ENCODE measurements at regions of chr11 and their contacts with region 1.

Region 1: DNA sequence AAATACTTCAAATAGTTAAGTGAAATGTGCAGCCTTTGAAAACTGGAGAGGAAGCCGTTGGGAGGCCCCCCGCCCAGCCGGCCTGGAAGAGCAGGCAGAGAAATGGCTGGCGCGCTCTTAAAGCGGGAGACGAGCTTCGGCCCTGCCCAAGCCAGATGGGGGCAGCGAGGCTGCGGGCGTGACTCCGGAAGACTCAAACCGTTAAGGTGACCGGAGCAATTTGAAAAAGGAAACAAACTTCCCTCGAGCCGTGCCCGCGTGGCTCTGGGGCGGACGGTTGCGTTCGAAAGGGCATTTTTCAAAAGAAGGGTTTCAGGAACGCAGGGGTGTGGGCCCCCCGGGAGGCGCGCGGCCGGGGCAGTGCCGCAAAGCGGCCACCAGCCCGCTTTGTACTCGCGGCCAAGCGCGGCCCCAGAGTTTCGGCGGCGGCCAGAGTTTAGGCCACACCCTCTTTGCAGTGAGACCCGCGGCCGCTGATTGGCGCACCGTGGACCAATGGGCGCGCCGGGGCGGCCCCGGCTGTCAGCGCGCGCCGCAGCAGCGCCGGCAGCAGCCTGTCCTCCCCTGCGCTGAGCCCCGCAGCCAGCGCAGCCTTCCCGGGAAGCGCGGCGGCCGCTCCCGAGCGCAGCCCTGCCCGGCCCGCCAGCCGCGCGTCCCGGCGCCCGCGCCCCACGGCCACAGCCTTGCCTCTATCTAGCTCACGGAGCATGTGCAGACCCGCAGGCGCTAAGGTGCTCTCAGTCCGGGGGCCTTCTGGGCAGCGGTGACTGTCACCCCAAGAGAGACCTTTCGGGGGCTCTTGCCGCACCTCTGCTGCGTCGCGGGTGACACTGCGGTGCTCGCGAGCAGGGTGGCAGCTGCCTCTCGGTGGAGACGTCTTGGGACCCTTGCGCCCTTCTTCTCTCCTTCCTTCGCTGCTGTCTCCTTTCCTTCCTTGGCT is at the start of gene NAV2:
- DNase-seq: peak; percentile 91
- ATAC-seq: peak; percentile 79
- H3K4me3 ChIP-seq: peak within 1 kb of the TSS; percentile 90
- H3K27ac ChIP-seq: peak within 1 kb of the TSS; percentile 81
- H3K4me1 ChIP-seq: peaks cover 38% of the 10 kb centered on the region
- H3K27me3 ChIP-seq: no peaks in the 10 kb centered on the region
- CTCF ChIP-seq: no peak
- total RNA-seq, gene NAV2: 10.4 and 14.9 TPM in 2 replicates

Region 2: DNA sequence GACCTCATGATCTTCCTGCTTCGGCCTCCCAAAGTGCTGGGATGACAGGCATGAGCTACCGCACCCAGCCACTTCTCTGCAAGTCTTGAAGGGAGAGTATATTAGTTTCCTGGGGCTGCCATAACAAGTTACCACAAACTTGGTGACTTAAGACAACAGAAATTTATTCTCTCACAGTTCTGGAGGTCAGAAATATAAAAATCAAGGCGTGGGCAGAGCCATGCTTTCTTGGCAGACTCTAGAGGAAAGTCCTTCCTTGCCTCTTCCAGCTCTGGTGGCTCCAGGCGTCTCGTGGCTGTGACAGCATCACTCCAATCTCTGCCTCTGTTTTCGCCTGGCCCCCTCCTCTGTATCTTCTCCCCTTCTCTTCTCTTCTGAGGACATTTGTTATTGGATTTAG is 110.1 kb before region 1 on chr11:
- CTCF ChIA-PET with region 1: no interaction called
- POLR2A ChIA-PET with region 1: interaction called, 22 read pairs
- intact Hi-C with region 1: no loop called
- DNase-seq: no peak
- ATAC-seq: no peak
- H3K4me3 ChIP-seq: no peak overlapping the region
- H3K27ac ChIP-seq: no peak overlapping the region
- H3K4me1 ChIP-seq: peaks cover 6% of the 10 kb centered on the region
- H3K27me3 ChIP-seq: no peaks in the 10 kb centered on the region
- CTCF ChIP-seq: no peak

Region 3: DNA sequence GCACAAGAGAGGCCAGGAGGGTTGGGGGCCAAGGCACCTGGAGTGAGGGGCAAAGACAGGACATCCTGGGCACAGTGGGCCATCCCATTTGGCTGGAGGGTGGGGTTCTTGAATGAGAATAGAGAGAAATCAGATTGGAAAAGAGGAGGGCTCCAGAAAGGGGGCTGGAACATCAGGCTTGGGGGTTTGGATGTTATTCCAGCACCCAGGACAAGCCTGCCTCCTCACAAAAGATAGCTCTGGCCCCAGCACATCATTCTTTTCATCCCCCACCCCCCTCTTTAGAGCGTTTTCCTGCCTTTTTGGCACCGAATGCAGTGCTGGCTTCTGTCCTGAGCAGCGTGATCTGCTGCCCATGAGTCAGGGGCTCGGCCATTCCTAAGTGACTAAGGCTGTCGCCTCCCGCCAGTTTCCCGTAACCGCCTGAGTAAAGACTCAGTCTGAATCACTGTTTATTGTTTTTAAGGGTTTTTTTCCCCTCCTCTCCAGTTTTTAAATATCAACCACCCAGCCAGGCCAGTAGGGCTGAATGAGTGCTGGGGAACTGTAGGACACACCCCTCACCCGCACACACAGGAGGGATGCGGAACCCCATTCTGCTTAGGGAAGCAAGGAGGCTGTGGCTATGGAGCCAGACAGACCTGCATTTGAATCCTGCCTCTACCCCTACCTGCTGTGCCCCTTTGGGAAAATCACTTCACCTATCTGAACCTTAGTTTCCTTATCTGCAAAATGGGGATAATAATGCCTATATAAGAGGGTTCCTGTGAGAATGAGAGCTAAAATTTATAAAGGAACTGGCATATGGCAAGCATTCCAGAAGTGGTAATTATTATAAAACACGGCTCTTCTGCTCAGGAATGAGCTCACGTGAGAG is 32.4 kb before region 1 on chr11:
- CTCF ChIA-PET with region 1: no interaction called
- POLR2A ChIA-PET with region 1: no interaction called
- intact Hi-C with region 1: loop called (anchors 1 kb)
- DNase-seq: peak; percentile 97
- ATAC-seq: peak; percentile 93
- H3K4me3 ChIP-seq: peak overlapping the region; percentile 20; the same call in 1 of the 2 replicates
- H3K27ac ChIP-seq: peak overlapping the region; percentile 66
- H3K4me1 ChIP-seq: peaks cover 29% of the 10 kb centered on the region
- H3K27me3 ChIP-seq: no peaks in the 10 kb centered on the region
- CTCF ChIP-seq: no peak

Region 4: DNA sequence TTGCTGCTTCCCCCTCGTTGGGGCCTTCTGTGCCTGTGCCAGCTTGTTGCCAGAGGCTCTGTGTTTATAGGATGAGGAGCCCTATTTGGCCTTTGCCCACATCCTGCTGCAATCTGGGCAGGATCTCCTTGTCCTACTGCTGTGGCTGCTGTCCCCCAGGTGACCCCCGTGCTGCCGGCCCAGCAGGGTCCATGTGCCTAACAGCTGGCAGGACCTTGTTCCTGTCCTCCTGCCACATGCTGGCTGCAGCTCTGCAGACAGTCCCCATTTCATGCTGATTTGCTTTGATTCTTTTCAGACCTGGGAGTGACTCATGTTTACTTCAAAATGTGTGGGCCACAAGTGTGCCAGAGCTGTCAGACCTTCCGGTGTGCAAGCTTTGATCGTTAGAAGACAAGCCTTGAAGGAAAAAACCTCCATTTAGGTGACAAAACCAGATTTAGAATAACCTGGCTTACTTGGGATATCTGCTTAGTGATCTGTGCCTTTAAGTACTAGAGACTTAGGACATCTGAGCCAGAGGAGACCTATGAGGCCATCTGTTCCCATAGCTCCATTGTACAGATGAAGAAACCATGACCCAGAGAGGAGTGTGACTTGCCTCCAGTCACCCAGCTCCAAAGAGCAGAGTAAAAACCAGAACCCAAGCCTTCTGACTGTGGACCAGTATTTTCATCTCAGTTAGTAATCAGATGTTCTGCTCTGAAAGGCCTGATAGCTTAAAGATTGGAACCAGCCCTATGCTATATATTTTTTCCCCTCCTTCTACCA is 11.2 kb after region 1 on chr11:
- CTCF ChIA-PET with region 1: no interaction called
- POLR2A ChIA-PET with region 1: no interaction called
- intact Hi-C with region 1: loop called (anchors 1 kb)
- DNase-seq: peak; percentile 84
- ATAC-seq: peak; percentile 68
- H3K4me3 ChIP-seq: 0 out of 2 replicates have a peak overlapping the region, but pooled peaks have one; percentile 12
- H3K27ac ChIP-seq: peak overlapping the region; percentile 68
- H3K4me1 ChIP-seq: peaks cover 70% of the 10 kb centered on the region
- H3K27me3 ChIP-seq: no peaks in the 10 kb centered on the region
- CTCF ChIP-seq: no peak

Measured in PC-3 (cell line).